ENCODE measurements at regions of chr11 and their contacts with region 1.

Region 1: DNA sequence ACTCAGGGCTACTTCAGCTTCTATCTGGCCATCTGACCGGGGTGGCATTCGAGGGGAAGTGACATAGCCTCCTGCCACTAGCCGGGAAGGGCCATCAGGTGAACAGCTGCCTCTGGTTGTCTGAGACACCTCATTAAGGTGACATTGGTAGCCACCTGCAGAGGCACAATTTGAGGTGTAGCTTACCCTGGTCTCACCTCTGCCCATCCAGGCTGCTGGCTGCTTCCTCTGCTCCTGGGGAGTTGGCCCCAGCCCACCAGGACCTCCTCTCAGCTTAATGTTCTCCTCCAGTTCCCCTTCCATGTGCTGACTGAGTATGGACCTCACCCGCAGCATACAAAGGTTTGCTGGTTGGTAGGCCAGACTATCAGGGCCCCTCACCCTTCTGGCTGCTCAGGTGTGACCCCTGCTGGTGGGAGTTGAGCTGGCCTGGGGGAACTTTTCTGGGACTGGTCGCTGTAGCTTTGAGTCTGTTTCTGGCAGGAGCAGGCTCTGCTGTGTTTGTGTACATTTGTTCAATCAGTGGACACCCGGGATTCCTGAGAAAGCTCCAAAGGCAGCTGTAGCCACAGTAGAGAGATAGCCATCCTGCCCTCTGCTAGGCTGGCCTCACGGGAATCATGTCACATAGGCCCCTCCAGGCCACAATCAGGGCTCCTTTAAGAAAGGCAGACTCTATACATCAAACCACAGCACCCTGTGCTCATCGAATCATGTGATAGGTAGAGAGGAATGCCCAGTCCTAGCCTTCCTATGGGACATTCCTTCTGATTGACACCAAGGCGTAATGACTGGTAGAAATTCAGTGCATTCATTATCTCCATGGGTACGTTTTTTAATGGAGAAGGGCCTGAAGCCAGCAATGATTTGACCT is 295.1 kb upstream of the PLET1 start:
- DNase-seq: peak; percentile 17 to 50 (median 22)
- H3K4me3 ChIP-seq: no peak overlapping the region
- H3K4me3 Mint-ChIP-seq: no peak overlapping the region
- H3K27ac ChIP-seq: no peak overlapping the region
- H3K27ac Mint-ChIP-seq: no peak overlapping the region
- H3K4me1 ChIP-seq: no peaks in the 10 kb centered on the region
- H3K4me1 Mint-ChIP-seq: peaks cover 3% of the 10 kb centered on the region
- H3K27me3 ChIP-seq: no peaks in the 10 kb centered on the region
- H3K27me3 Mint-ChIP-seq: peaks cover 0 to 3% (median 0%) of the 10 kb centered on the region in 3 donors
- CTCF ChIP-seq: peak; percentile 80

Region 2: DNA sequence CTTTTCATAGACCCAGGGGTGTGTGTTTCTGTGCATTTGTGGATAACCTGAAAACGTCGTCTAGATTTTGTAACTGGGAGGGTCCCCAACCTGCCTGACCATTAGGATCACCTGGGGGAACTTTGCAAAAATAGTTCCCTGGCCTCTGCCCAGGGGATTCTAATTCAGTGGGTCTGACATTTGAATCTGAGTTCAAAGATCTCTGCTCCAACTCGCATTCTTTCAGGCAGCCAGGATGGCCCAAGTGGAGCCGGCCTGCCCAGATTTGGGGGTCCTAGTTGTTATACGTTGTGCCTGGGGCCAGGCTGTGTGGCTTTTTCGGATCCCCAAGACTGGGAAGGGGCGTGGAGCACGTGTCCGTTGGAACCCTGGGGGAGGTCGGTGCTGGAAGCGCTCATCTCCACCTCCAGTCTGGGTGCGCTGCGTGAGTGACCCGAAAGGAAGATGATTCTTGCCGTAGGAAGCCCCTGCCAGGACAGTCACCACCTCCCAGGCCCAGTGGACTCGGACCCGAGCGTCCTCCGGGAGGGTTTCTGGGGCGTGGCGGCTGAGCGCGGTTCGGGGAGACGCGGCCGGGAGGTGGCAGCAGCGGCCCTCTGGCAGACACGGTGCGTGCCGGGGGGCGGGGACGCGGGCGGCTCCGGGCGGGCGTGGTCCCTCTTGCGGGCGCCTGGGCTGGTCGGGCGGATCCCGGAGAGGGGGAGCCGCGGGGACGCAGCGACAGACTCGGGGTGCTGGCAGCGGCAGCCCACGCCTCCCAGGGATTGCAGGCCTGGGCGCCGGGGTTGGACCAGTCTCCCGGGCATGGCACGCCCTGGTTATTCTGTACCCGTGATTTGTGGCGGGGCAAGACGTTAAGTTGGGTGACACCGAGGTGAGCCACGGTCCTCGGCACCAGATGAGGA is 265.9 kb before region 1 on chr11:
- intact Hi-C with region 1: loop called (anchors 2 to 5 kb)
- DNase-seq: peak; percentile 56 to 71 (median 69)
- H3K4me3 ChIP-seq: peak overlapping the region; percentile 19 to 62 (median 20)
- H3K4me3 Mint-ChIP-seq: peak overlapping the region; percentile 65 to 78
- H3K27ac ChIP-seq: no peak overlapping the region
- H3K27ac Mint-ChIP-seq: peak overlapping the region in 3 of 7 donors; percentile 36 to 64 (median 50)
- H3K4me1 ChIP-seq: peaks cover 25 to 27% of the 10 kb centered on the region in 2 donors
- H3K4me1 Mint-ChIP-seq: peaks cover 40% of the 10 kb centered on the region
- H3K27me3 ChIP-seq: no peaks in the 10 kb centered on the region
- H3K27me3 Mint-ChIP-seq: peaks cover 2 to 4% (median 3%) of the 10 kb centered on the region in 3 donors
- CTCF ChIP-seq: peak; percentile 85